ENCODE measurements at regions of chr21 and their contacts with region 1.

Region 1: DNA sequence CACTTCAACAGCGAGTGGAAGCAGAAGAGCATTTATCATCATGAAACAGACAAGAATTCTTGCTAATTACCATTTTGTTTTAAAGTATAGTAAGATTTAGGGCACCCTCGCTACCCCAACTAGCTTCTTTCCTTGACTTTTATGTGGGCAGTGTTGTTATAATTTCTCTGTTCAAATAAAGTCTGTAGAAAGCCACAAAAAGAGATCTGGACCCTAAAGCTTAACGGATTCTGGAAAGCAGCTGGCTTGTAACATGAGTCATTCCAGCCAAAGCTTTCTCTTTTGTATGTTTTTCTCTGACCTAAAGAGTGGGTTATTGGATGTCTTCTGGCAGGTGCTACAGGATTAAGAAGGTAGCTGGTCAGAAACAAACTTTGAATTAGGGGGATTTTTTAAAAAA is 37.4 kb downstream of the RUNX1 start:
- DNase-seq: no peak
- ATAC-seq: no peak
- H3K4me3 ChIP-seq: no peak overlapping the region
- H3K27ac ChIP-seq: no peak overlapping the region
- H3K4me1 ChIP-seq: no peaks in the 10 kb centered on the region
- H3K27me3 ChIP-seq: no peaks in the 10 kb centered on the region
- CTCF ChIP-seq: no peak
- POLR2A ChIP-seq: no peak

Region 2: DNA sequence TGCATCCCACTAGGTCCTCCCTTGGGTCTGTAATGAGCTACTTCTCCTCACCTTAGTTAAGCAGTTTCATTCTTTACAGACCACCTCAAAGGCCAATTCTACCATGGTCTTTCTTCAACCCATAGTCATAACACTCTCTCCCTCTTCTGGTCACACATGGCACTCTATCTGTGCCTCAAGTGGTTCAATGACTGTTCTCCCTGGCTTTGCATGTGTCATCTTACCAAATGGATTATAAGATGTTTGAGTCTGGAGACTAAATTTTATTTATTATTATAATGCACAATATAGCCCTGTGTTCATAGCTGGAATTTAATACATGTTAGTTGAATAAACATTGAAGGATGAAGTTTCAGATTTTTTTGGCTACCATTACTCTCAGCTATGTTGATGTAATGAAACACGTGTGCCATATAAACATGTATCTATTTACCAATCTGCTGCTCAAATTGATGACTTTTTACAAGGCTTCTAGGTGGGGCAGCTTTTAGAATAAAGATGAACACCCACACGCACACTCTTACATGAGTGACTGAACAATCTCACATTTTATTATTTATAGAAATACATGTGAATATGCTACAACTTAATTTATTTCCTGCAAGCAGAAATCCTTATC is 64.7 kb before region 1 on chr21:
- intact Hi-C with region 1: loop called in 1 of 2 experiments (anchors 10 kb)
- DNase-seq: no peak
- ATAC-seq: no peak
- H3K4me3 ChIP-seq: no peak overlapping the region
- H3K27ac ChIP-seq: no peak overlapping the region
- H3K4me1 ChIP-seq: no peaks in the 10 kb centered on the region
- H3K27me3 ChIP-seq: no peaks in the 10 kb centered on the region
- CTCF ChIP-seq: no peak
- POLR2A ChIP-seq: no peak

Measured in right lobe of liver (tissue), 6 donors.